ENCODE measurements at regions of chr18 and their contacts with region 1.

Region 1: DNA sequence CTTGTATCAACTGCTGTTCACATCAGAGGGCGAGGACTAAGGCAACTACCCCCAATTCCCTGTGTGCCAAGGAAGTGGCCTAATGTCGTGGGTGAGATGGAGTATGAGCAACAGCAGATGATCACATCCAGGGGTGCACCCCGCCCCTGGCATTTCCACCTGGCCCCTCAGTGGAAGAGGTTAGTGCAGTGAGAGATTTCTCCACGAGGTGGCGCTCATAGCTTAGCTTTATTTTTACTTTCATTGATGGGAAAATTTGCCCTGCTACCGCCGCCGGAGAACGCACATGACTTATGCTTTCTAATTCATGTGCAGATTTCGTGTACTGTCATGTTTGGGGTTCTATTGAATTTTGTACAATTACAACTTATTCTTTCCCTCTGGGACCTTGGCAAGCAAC is 470.6 kb upstream of the MEX3C start:
- DNase-seq: no peak
- ATAC-seq: peak; percentile 90
- H3K4me3 ChIP-seq: no peak overlapping the region
- H3K27ac ChIP-seq: no peak overlapping the region
- H3K4me1 ChIP-seq: no peaks in the 10 kb centered on the region
- H3K27me3 ChIP-seq: no peaks in the 10 kb centered on the region
- CTCF ChIP-seq: peak; percentile 70 to 84 (median 80)
- EP300 ChIP-seq: no peak
- POLR2A ChIP-seq: no peak
- RAD21 ChIP-seq: peak; percentile 85

Region 2: GRCh38 chr18:51610481-51610880 is 57.6 kb before region 1 on chr18:
- CTCF ChIA-PET with region 1: no interaction called
- POLR2A ChIA-PET with region 1: no interaction called
- RAD21 ChIA-PET with region 1: no interaction called
- SMC1A ChIA-PET with region 1: no interaction called
- in situ Hi-C with region 1: no loop called
- intact Hi-C with region 1: no loop called
- DNase-seq: no peak
- ATAC-seq: no peak
- H3K4me3 ChIP-seq: no peak overlapping the region
- H3K27ac ChIP-seq: no peak overlapping the region
- H3K4me1 ChIP-seq: no peaks in the 10 kb centered on the region
- H3K27me3 ChIP-seq: no peaks in the 10 kb centered on the region
- CTCF ChIP-seq: no peak
- EP300 ChIP-seq: no peak
- POLR2A ChIP-seq: no peak
- RAD21 ChIP-seq: no peak

Region 3: GRCh38 chr18:51621113-51621863 is 46.8 kb before region 1 on chr18:
- CTCF ChIA-PET with region 1: interaction called, 53 read pairs
- POLR2A ChIA-PET with region 1: no interaction called
- RAD21 ChIA-PET with region 1: interaction called, 76 read pairs
- SMC1A ChIA-PET with region 1: interaction called, 38 read pairs
- in situ Hi-C with region 1: no loop called
- intact Hi-C with region 1: loop called (anchors 2 kb)
- DNase-seq: peak; percentile 12
- ATAC-seq: peak; percentile 90
- H3K4me3 ChIP-seq: no peak overlapping the region
- H3K27ac ChIP-seq: no peak overlapping the region
- H3K4me1 ChIP-seq: no peaks in the 10 kb centered on the region
- H3K27me3 ChIP-seq: no peaks in the 10 kb centered on the region
- CTCF ChIP-seq: peak; percentile 87 to 92 (median 90)
- EP300 ChIP-seq: no peak
- POLR2A ChIP-seq: no peak
- RAD21 ChIP-seq: peak; percentile 98

Region 4: GRCh38 chr18:51721388-51721787 is 53.3 kb after region 1 on chr18:
- CTCF ChIA-PET with region 1: interaction called, 10 read pairs
- POLR2A ChIA-PET with region 1: no interaction called
- RAD21 ChIA-PET with region 1: interaction called, 23 read pairs
- SMC1A ChIA-PET with region 1: interaction called, 12 read pairs
- in situ Hi-C with region 1: no loop called
- intact Hi-C with region 1: loop called (anchors 2 kb)
- DNase-seq: no peak
- ATAC-seq: no peak
- H3K4me3 ChIP-seq: no peak overlapping the region
- H3K27ac ChIP-seq: no peak overlapping the region
- H3K4me1 ChIP-seq: peaks cover 20% of the 10 kb centered on the region
- H3K27me3 ChIP-seq: no peaks in the 10 kb centered on the region; a peak in 1 of 4 replicates
- CTCF ChIP-seq: no peak
- EP300 ChIP-seq: no peak
- POLR2A ChIP-seq: no peak
- RAD21 ChIP-seq: no peak

Region 5: DNA sequence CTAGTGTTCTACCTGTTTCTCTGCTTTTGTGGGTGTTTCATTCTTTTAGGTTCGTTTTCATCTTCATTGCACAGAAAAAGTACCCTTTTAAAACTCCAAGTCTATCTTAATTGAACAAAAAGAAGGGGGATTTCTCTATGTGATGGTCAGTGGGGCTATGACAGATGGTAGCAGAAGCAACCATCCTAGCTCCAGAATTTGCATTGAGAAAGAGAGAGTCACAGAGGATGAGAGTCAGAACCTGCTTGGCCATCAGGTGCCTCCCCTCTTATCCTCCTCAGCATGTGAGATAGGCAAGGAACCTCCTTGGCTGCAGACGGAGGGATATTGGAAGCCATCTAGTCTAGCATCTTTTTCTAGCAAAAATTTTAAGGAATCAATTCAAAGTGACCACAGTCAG is 273.9 kb after region 1 on chr18:
- CTCF ChIA-PET with region 1: interaction called, 37 read pairs
- POLR2A ChIA-PET with region 1: no interaction called
- RAD21 ChIA-PET with region 1: interaction called, 20 read pairs
- SMC1A ChIA-PET with region 1: interaction called, 37 read pairs
- in situ Hi-C with region 1: no loop called
- intact Hi-C with region 1: no loop called
- DNase-seq: no peak
- ATAC-seq: peak; percentile 43
- H3K4me3 ChIP-seq: no peak overlapping the region
- H3K27ac ChIP-seq: no peak overlapping the region
- H3K4me1 ChIP-seq: no peaks in the 10 kb centered on the region
- H3K27me3 ChIP-seq: no peaks in the 10 kb centered on the region
- CTCF ChIP-seq: no peak
- EP300 ChIP-seq: no peak
- POLR2A ChIP-seq: no peak
- RAD21 ChIP-seq: no peak

Region 6: GRCh38 chr18:52288403-52289004 is 620.4 kb after region 1 on chr18:
- CTCF ChIA-PET with region 1: interaction called, 150 read pairs
- POLR2A ChIA-PET with region 1: interaction called, 3 read pairs
- RAD21 ChIA-PET with region 1: interaction called, 137 read pairs
- SMC1A ChIA-PET with region 1: interaction called, 153 read pairs
- in situ Hi-C with region 1: loop called (anchors 5 kb)
- intact Hi-C with region 1: loop called (anchors 1 kb)
- DNase-seq: no peak
- ATAC-seq: peak; percentile 94
- H3K4me3 ChIP-seq: no peak overlapping the region
- H3K27ac ChIP-seq: no peak overlapping the region
- H3K4me1 ChIP-seq: no peaks in the 10 kb centered on the region
- H3K27me3 ChIP-seq: no peaks in the 10 kb centered on the region
- CTCF ChIP-seq: peak; percentile 88 to 93 (median 88)
- EP300 ChIP-seq: no peak
- POLR2A ChIP-seq: no peak
- RAD21 ChIP-seq: peak; percentile 92

Region 7: DNA sequence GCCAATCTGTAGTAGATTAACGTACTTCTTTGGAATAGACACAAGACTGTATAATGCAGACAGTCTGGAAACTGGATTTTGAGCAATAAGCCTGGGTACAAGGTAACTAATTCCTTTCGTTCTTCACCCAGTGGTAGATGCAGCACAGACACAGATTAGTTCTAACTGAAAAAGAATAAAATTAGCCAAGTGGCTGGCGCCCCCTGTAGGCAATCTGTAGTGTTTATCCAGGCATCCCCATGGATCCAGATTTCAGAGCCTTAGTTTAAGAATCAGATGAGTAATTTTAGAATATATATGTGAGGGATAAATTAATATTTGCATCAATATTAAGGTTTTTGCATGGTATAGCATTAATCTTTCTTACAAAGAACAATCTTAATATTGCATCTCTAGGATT is 1235.8 kb after region 1 on chr18:
- CTCF ChIA-PET with region 1: interaction called, 4 read pairs
- POLR2A ChIA-PET with region 1: no interaction called
- RAD21 ChIA-PET with region 1: no interaction called
- SMC1A ChIA-PET with region 1: interaction called, 4 read pairs
- in situ Hi-C with region 1: loop called (anchors 25 kb)
- intact Hi-C with region 1: loop called (anchors 5 kb)
- DNase-seq: no peak
- ATAC-seq: peak; percentile 82
- H3K4me3 ChIP-seq: no peak overlapping the region
- H3K27ac ChIP-seq: no peak overlapping the region
- H3K4me1 ChIP-seq: no peaks in the 10 kb centered on the region
- H3K27me3 ChIP-seq: no peaks in the 10 kb centered on the region
- CTCF ChIP-seq: peak; percentile 46 to 55 (median 46)
- EP300 ChIP-seq: no peak
- POLR2A ChIP-seq: no peak
- RAD21 ChIP-seq: peak; percentile 63